ENCODE measurements at regions of chr11 and their contacts with region 1.

Region 1: GRCh38 chr11:62694455-62695167 is 5.3 kb upstream of the LRRN4CL start:
- DNase-seq: peak; percentile 84
- H3K4me3 ChIP-seq: no peak overlapping the region
- H3K27ac ChIP-seq: no peak overlapping the region
- H3K4me1 ChIP-seq: no peaks in the 10 kb centered on the region
- H3K27me3 ChIP-seq: no peaks in the 10 kb centered on the region
- CTCF ChIP-seq: peak; percentile 81

Region 2: GRCh38 chr11:62004473-62004872 is 690.1 kb before region 1 on chr11:
- intact Hi-C with region 1: no loop called
- DNase-seq: no peak
- H3K4me3 ChIP-seq: no peak overlapping the region
- H3K27ac ChIP-seq: no peak overlapping the region
- H3K4me1 ChIP-seq: peaks cover 5% of the 10 kb centered on the region
- H3K27me3 ChIP-seq: no peaks in the 10 kb centered on the region
- CTCF ChIP-seq: no peak

Region 3: DNA sequence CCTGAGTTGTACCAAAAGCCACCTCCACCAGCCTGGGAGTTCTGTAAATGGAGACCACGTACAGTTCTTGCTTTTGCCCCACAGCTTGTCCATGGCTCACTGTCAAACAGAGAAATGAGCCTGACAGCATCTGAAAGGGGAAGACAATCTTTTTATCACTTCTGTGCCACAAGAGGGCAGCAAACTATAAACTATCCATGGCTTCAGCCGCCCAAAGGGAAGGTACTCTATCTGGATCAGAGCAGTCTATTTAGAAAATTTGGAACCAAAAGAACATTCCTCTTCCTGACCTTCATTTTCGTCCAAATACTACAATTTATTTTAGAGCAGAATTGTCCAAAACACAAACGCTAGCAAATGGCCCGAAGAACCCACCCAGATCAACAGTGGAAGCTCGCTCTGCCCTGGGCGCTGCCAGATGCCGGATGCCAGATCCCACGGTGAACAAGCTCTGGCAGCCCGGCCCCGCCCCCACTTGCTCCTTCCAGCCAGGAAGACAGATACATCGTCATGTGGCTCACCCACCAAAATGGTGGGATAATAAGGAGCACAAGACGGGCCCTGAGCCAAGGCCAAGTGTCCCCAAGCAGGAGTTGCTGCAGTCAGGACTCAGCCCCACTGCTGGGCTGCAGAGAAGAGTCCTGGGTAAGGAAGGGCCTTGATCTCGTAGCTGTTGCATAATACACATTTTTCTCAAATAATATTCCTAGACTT is 299.6 kb before region 1 on chr11:
- intact Hi-C with region 1: loop called (anchors 10 kb)
- DNase-seq: peak; percentile 67
- H3K4me3 ChIP-seq: no peak overlapping the region
- H3K27ac ChIP-seq: peak overlapping the region; percentile 24
- H3K4me1 ChIP-seq: peaks cover 2% of the 10 kb centered on the region
- H3K27me3 ChIP-seq: no peaks in the 10 kb centered on the region
- CTCF ChIP-seq: peak; percentile 60

Region 4: GRCh38 chr11:62591448-62592145 is 103.0 kb before region 1 on chr11 and contains the start of gene TUT1:
- intact Hi-C with region 1: loop called (anchors 10 kb)
- DNase-seq: peak; percentile 98
- H3K4me3 ChIP-seq: peak within 1 kb of the TSS; percentile 54
- H3K27ac ChIP-seq: peak within 1 kb of the TSS; percentile 94
- H3K4me1 ChIP-seq: peaks cover 20% of the 10 kb centered on the region
- H3K27me3 ChIP-seq: no peaks in the 10 kb centered on the region
- CTCF ChIP-seq: no peak
- total RNA-seq, gene TUT1: 11.1 to 26.2 TPM